CD8-positive, alpha-beta T cell (primary cell): ENCODE measurements at regions of chr3 and their contacts with region 1.

Region 1: GRCh38 chr3:125357032-125357658 is 18.0 kb downstream of the ZNF148 start:
- DNase-seq: peak in 8 of 9 experiments; percentile 35 to 82 (median 66)
- ATAC-seq: peak; percentile 97
- H3K4me3 ChIP-seq: peak overlapping the region; percentile 58 to 60
- H3K4me3 Mint-ChIP-seq: peak overlapping the region; percentile 92
- H3K27ac ChIP-seq: peak overlapping the region; percentile 55 to 64
- H3K27ac Mint-ChIP-seq: peak overlapping the region; percentile 97
- H3K4me1 ChIP-seq: peaks cover 24% of the 10 kb centered on the region
- H3K4me1 Mint-ChIP-seq: peaks cover 75% of the 10 kb centered on the region
- H3K27me3 ChIP-seq: no peaks in the 10 kb centered on the region
- H3K27me3 Mint-ChIP-seq: no peaks in the 10 kb centered on the region
- CTCF ChIP-seq: no peak

Region 2: GRCh38 chr3:125310623-125311081 is 46.5 kb before region 1 on chr3:
- CTCF ChIA-PET with region 1: no interaction called
- POLR2A ChIA-PET with region 1: interaction called, 3 read pairs
- intact Hi-C with region 1: loop called in 1 of 2 experiments (anchors 5 kb)
- DNase-seq: peak; percentile 13 to 73 (median 58)
- ATAC-seq: peak; percentile 92
- H3K4me3 ChIP-seq: peak overlapping the region; percentile 25 to 43
- H3K4me3 Mint-ChIP-seq: peak overlapping the region; percentile 90
- H3K27ac ChIP-seq: peak overlapping the region; percentile 12 to 78
- H3K27ac Mint-ChIP-seq: peak overlapping the region; percentile 96
- H3K4me1 ChIP-seq: peaks cover 18% of the 10 kb centered on the region
- H3K4me1 Mint-ChIP-seq: peaks cover 53% of the 10 kb centered on the region
- H3K27me3 ChIP-seq: no peaks in the 10 kb centered on the region
- H3K27me3 Mint-ChIP-seq: no peaks in the 10 kb centered on the region
- CTCF ChIP-seq: no peak

Region 3: DNA sequence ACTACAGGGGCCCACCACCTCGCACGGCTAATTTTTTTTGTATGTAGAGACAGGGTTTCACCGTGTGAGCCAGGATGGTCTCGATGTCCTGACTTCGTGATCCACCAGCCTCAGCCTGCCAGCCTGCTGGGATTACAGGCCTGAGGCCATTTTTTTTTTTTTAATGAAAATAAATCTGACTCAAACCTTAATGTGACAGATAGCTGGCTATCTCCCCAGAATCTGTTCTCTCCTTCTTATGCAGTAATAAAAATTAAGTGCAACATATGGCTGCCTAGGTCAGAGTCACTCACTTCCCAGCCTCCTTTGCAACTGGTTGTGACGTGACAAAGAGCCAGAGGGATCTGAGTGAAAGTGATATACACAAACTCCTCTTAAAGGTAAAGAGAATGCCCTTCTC is 35.0 kb before region 1 on chr3:
- CTCF ChIA-PET with region 1: no interaction called
- POLR2A ChIA-PET with region 1: no interaction called
- intact Hi-C with region 1: loop called in 1 of 2 experiments (anchors 5 kb)
- DNase-seq: no peak
- ATAC-seq: no peak
- H3K4me3 ChIP-seq: no peak overlapping the region
- H3K4me3 Mint-ChIP-seq: no peak overlapping the region
- H3K27ac ChIP-seq: no peak overlapping the region
- H3K27ac Mint-ChIP-seq: no peak overlapping the region
- H3K4me1 ChIP-seq: no peaks in the 10 kb centered on the region
- H3K4me1 Mint-ChIP-seq: peaks cover 7% of the 10 kb centered on the region
- H3K27me3 ChIP-seq: no peaks in the 10 kb centered on the region
- H3K27me3 Mint-ChIP-seq: no peaks in the 10 kb centered on the region
- CTCF ChIP-seq: no peak

Region 4: DNA sequence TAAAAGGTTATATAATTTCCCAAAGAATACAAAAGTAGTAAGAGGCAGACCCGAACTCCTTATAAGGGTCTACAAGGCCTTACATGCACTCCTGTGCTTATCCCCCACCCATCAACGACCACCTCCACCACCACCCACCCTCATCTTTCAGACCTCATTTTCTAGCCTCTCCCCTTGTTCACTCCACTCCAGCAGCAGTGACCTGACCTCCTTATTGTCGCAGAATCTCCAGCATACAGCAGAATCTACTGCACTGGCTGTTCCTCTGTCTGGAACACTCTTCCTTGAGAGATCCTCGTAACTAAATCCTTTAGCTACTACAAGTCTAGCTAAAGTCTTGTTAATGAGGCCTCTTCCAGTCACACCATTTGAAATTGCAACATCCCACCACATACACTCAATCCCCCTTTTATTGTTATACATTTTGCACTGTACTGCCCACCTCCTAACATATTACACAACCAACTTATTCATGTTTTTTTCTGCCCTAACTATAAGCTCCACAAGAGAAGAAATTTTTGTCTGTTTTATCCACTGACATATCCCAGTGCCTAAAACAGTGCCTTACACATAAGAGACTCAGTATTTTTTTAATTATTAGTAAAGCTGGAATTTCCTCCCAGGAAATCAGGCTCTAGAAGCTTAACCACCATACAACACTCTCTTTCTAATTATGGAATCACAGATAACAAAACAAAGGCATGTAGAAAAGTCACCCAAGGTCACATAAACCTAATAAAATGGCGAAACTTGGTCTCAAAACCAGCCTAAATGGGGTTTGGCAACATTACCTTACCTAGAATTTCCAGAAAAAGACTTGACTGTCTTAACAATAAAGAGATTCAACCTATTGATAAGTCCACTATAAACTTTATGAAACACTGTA is 22.2 kb before region 1 on chr3:
- CTCF ChIA-PET with region 1: no interaction called
- POLR2A ChIA-PET with region 1: interaction called, 3 read pairs
- intact Hi-C with region 1: loop called in 1 of 2 experiments (anchors 2 kb)
- DNase-seq: no peak
- ATAC-seq: no peak
- H3K4me3 ChIP-seq: no peak overlapping the region
- H3K4me3 Mint-ChIP-seq: no peak overlapping the region
- H3K27ac ChIP-seq: no peak overlapping the region
- H3K27ac Mint-ChIP-seq: peak overlapping the region; percentile 56
- H3K4me1 ChIP-seq: peaks cover 3% of the 10 kb centered on the region
- H3K4me1 Mint-ChIP-seq: peaks cover 62% of the 10 kb centered on the region
- H3K27me3 ChIP-seq: no peaks in the 10 kb centered on the region
- H3K27me3 Mint-ChIP-seq: no peaks in the 10 kb centered on the region
- CTCF ChIP-seq: no peak